K562 (cell line): ENCODE measurements at regions of chr19 and their contacts with region 1.

Region 1: GRCh38 chr19:17953869-17954268 is 13.0 kb upstream of the KCNN1 start:
- DNase-seq: peak; percentile 71 to 91 (median 80)
- ATAC-seq: peak; percentile 95
- H3K4me3 ChIP-seq: no peak overlapping the region
- H3K27ac ChIP-seq: peak overlapping the region; percentile 37; the same call in 2 of the 3 replicates
- H3K4me1 ChIP-seq: peaks cover 54 to 62% of the 10 kb centered on the region in 2 experiments
- H3K27me3 ChIP-seq: no peaks in the 10 kb centered on the region
- CTCF ChIP-seq: no peak
- EP300 ChIP-seq: no peak
- POLR2A ChIP-seq: peak; percentile 40; the same call in 1 of the 2 replicates
- RAD21 ChIP-seq: no peak

Region 2: DNA sequence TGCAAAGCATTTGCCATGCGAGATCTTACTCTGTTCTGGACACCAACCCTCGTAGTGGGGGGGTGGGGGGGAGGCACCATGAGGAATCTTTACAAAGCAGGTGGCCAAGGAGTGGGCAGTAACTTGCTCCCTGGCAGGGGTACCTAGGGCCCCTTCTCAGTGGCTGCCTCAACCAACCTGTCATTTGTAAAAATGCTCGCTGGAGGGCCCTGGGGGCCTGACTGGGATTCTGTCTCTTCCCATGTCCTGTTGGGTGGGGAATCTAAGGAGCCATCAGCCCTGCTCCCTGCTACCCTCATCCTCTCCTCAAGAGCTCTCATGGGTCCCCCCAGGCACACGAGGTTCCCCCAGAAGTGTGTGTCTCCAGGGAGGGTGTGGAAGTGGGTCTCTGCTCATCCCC is 14.5 kb after region 1 on chr19:
- CTCF ChIA-PET with region 1: no interaction called
- POLR2A ChIA-PET with region 1: interaction called, 14 read pairs
- in situ Hi-C with region 1: no loop called
- intact Hi-C with region 1: no loop called
- DNase-seq: no peak
- ATAC-seq: no peak
- H3K4me3 ChIP-seq: no peak overlapping the region
- H3K27ac ChIP-seq: no peak overlapping the region
- H3K4me1 ChIP-seq: peaks cover 12 to 40% of the 10 kb centered on the region in 2 experiments
- H3K27me3 ChIP-seq: no peaks in the 10 kb centered on the region
- CTCF ChIP-seq: no peak
- EP300 ChIP-seq: no peak
- POLR2A ChIP-seq: no peak
- RAD21 ChIP-seq: no peak